ENCODE measurements at regions of chr9 and their contacts with region 1.

Region 1: GRCh38 chr9:112379177-112380101 is 469 bp upstream of the HSDL2 start:
- DNase-seq: peak; percentile 98
- H3K4me3 Mint-ChIP-seq: peak overlapping the region; percentile 93
- H3K27ac Mint-ChIP-seq: peak overlapping the region; percentile 83
- H3K4me1 Mint-ChIP-seq: peaks cover 34% of the 10 kb centered on the region
- H3K27me3 Mint-ChIP-seq: no peaks in the 10 kb centered on the region
- CTCF ChIP-seq: no peak

Region 2: DNA sequence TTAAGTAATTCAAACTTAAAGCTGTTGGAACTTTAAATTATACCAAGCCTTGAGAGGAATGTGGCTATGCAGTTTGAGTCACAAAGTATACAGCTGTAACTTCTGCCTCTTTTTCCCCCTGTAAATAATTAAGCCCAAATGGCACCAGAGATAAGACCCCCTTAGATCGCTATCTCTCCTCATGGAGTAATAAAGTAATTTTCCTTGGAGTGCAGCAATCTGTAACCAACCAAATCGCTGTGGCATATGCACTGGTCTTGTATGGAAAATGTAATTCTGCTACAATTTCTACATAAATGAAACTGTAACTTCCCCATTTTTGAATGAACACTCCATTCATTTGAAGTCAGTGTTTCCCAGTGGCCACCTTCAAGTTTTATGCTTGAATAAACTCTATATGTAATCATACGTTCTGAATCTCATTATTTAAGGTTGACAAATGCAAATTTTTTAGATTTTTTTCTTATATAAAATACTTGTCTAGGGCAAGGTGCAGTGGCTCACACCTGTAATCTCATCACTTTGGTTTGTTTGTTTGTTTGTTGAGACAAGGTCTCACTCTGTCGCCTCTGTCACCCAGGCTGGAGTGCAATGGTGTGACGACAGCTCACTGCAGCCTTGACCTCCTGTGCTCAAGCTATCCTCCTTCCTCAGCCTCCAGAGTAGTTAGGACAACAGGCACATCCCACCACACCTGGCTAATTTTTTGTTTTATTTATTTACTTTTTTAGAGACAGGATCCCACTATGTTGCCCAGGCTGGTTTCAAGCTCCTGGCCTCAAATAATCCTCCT is 216.6 kb before region 1 on chr9:
- CTCF ChIA-PET with region 1: no interaction called
- POLR2A ChIA-PET with region 1: no interaction called
- intact Hi-C with region 1: no loop called
- DNase-seq: no peak
- H3K4me3 Mint-ChIP-seq: no peak overlapping the region
- H3K27ac Mint-ChIP-seq: no peak overlapping the region
- H3K4me1 Mint-ChIP-seq: peaks cover 16% of the 10 kb centered on the region
- H3K27me3 Mint-ChIP-seq: no peaks in the 10 kb centered on the region
- CTCF ChIP-seq: no peak

Region 3: DNA sequence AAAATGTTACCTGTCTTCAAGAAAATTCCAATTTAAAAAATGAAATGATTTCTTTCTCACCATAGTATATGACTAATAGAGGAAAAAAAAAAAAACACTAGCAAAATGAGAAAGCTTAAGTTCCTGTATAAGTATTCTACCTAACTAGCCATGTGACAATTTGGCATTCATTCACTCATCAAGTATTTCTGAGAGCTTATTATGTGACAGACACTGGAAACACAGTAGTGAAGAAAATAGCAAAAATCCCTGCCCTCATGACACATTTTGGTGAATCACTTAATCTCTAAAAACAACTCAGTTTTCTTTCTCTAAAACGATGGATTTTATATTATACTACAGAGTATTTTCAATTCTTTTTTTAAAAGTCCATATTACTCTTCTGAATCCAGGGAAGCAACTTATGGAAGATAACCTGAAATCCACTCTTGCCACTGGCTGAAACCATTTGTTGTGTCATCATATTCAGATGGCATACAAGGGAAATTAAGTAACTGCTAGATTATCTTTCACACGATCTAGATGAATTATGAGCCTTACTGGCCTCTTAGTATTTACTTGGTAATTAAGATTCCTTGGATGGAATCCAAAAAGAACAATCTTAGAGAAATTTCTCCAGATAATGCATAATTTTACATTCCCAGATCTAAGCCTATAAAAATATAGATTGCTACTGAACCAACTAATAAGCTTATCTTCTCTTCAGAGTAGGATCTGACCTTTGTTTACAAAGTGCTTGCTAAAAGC is 51.5 kb before region 1 on chr9:
- CTCF ChIA-PET with region 1: interaction called, 3 read pairs
- POLR2A ChIA-PET with region 1: interaction called, 50 read pairs
- intact Hi-C with region 1: no loop called
- DNase-seq: peak; percentile 36
- H3K4me3 Mint-ChIP-seq: no peak overlapping the region
- H3K27ac Mint-ChIP-seq: peak overlapping the region; percentile 81
- H3K4me1 Mint-ChIP-seq: peaks cover 36% of the 10 kb centered on the region
- H3K27me3 Mint-ChIP-seq: no peaks in the 10 kb centered on the region
- CTCF ChIP-seq: no peak

Region 4: DNA sequence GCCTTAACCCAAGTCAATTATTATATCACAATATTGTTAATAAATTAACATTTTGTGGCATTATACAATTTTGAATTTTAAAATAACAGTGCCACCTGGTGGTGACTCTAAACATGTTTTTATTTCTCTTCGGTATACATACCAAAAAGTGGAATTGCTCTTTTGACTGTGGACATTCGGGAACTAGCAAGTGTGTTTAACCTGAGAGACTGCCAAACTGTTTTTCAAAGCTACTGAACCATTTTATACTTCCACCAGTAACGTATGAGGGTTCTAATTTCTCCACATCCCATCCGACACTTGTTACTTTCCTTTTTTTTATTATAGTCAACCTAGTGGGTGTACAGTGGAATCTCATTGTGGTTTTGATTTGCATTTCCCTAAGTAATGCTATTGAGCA is 17.8 kb before region 1 on chr9:
- CTCF ChIA-PET with region 1: interaction called, 28 read pairs
- POLR2A ChIA-PET with region 1: interaction called, 21 read pairs
- intact Hi-C with region 1: no loop called
- DNase-seq: peak; percentile 48
- H3K4me3 Mint-ChIP-seq: no peak overlapping the region
- H3K27ac Mint-ChIP-seq: no peak overlapping the region
- H3K4me1 Mint-ChIP-seq: peaks cover 5% of the 10 kb centered on the region
- H3K27me3 Mint-ChIP-seq: no peaks in the 10 kb centered on the region
- CTCF ChIP-seq: peak; percentile 34

Region 5: GRCh38 chr9:112486221-112487007 is 107.0 kb after region 1 on chr9 and contains the start of gene KIAA1958:
- CTCF ChIA-PET with region 1: interaction called, 5 read pairs
- POLR2A ChIA-PET with region 1: interaction called, 44 read pairs
- intact Hi-C with region 1: no loop called
- DNase-seq: peak; percentile 83
- H3K4me3 Mint-ChIP-seq: peak within 1 kb of the TSS; percentile 96
- H3K27ac Mint-ChIP-seq: peak within 1 kb of the TSS; percentile 77
- H3K4me1 Mint-ChIP-seq: peaks cover 6% of the 10 kb centered on the region
- H3K27me3 Mint-ChIP-seq: no peaks in the 10 kb centered on the region
- CTCF ChIP-seq: no peak
- total RNA-seq, gene KIAA1958: 4.9 and 5.8 TPM in 2 replicates

Region 6: GRCh38 chr9:112711050-112711689 is 331.7 kb after region 1 on chr9:
- CTCF ChIA-PET with region 1: interaction called, 21 read pairs
- POLR2A ChIA-PET with region 1: interaction called, 5 read pairs
- intact Hi-C with region 1: loop called (anchors 2 kb)
- DNase-seq: peak; percentile 38
- H3K4me3 Mint-ChIP-seq: no peak overlapping the region
- H3K27ac Mint-ChIP-seq: no peak overlapping the region
- H3K4me1 Mint-ChIP-seq: peaks cover 17% of the 10 kb centered on the region
- H3K27me3 Mint-ChIP-seq: no peaks in the 10 kb centered on the region
- CTCF ChIP-seq: peak; percentile 40

Region 7: DNA sequence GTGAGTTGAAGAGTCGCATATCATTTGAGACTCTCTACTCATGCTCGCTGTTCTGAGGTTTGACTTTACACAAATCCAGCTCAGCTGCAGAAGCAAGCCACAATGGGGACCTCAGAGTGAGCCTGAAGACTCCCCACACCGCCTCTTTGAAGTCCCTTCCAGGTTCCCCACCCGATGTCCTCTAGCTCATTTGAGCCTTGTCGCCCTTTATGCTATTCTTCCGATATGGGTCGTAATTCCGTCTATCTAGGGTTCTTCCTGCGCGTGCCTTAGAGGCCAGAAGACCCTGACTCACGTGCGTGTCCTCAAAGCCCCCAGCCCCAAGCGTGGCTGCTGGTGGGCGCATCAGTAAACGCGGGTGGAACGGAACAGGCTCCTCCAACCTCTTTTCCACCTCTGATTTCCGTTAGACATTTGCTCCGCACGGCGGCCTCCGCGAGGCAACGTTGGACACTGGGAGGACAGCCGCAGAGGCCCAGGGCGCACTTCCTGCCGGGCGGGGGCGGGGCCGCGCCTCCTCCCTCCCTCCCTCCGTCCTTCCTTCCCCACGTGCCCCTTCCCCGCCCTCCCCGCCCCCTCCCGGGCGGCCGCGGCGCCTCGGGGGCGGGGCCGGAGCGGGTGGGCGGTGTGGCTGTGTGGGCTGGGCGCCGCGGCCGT is 370.8 kb after region 1 on chr9 and contains the start of gene SNX30:
- CTCF ChIA-PET with region 1: interaction called, 4 read pairs
- POLR2A ChIA-PET with region 1: interaction called, 16 read pairs
- intact Hi-C with region 1: no loop called
- DNase-seq: peak; percentile 90
- H3K4me3 Mint-ChIP-seq: peak within 1 kb of the TSS; percentile 98
- H3K27ac Mint-ChIP-seq: peak within 1 kb of the TSS; percentile 98
- H3K4me1 Mint-ChIP-seq: peaks cover 23% of the 10 kb centered on the region
- H3K27me3 Mint-ChIP-seq: no peaks in the 10 kb centered on the region
- CTCF ChIP-seq: no peak
- total RNA-seq, gene SNX30: 9.0 and 9.6 TPM in 2 replicates

Measured in MCF 10A (cell line).